Activated B cell treated with CpG ODN at 0.5 μM for 24 hours (primary cell): ENCODE measurements at regions of chr19 and their contacts with region 1.

Region 1: DNA sequence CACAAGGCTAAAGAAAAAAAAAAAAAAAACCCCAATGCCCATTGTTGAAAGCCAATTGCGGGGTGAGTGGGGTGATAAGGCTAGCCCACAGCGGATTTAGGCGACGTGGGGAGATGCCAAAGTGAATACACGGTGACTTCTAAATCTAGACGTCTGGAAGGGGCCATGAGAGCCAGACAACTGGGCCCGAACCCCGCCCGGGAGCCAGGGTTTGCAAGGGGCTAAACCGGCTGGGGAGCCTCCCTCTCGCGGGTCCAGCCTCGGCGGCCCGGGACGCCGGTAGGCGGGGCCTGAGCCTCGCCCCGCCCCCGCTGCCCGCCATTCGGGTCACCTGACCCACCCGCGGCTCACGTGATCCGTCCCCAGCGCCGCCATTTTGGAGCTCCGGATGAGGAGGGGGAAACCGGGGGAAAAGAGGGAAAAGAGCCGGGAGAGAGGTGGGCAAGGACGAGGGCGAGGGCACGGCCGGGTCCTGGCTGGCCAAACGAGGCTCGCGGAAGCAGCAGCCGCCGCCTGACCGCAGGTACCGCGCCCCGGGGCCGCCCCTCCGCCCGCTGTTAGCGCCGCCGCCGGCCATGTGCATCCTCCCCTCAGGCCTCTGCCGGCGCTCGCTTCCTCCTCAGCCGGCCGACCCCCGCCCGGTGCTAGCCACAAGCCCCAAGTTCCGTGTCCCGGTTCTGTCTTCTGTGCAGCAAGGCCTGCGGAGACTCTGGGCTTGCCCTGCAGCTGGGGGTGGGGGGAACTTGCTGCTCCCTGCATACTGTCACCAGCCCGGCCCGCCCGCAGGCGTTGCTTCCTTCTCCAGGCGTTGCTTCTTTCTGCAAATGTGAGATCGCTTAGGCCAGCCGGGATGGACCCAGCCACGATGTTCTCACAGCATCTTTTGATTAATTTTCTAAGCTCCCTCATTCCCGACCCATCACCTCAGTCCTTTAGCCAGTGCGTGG is at the start of gene ZNF507:
- DNase-seq: peak; percentile 84
- ATAC-seq: peak; percentile 86
- H3K4me3 Mint-ChIP-seq: peak within 1 kb of the TSS; percentile 98
- H3K27ac Mint-ChIP-seq: peak within 1 kb of the TSS; percentile 92
- H3K4me1 Mint-ChIP-seq: peaks cover 36% of the 10 kb centered on the region
- H3K27me3 Mint-ChIP-seq: no peaks in the 10 kb centered on the region
- CTCF ChIP-seq: no peak
- total RNA-seq, gene ZNF507: 35.3 and 38.6 TPM in 2 replicates

Region 2: GRCh38 chr19:32405431-32406161 is 60.1 kb after region 1 on chr19 and contains the start of gene DPY19L3:
- CTCF ChIA-PET with region 1: interaction called, 4 read pairs
- POLR2A ChIA-PET with region 1: interaction called, 38 read pairs
- intact Hi-C with region 1: loop called (anchors 1 kb)
- DNase-seq: peak; percentile 93
- ATAC-seq: peak; percentile 91
- H3K4me3 Mint-ChIP-seq: peak within 1 kb of the TSS; percentile 91
- H3K27ac Mint-ChIP-seq: peak within 1 kb of the TSS; percentile 93
- H3K4me1 Mint-ChIP-seq: peaks cover 16% of the 10 kb centered on the region
- H3K27me3 Mint-ChIP-seq: no peaks in the 10 kb centered on the region
- CTCF ChIP-seq: no peak
- total RNA-seq, gene DPY19L3: 22.1 and 29.8 TPM in 2 replicates

Region 3: DNA sequence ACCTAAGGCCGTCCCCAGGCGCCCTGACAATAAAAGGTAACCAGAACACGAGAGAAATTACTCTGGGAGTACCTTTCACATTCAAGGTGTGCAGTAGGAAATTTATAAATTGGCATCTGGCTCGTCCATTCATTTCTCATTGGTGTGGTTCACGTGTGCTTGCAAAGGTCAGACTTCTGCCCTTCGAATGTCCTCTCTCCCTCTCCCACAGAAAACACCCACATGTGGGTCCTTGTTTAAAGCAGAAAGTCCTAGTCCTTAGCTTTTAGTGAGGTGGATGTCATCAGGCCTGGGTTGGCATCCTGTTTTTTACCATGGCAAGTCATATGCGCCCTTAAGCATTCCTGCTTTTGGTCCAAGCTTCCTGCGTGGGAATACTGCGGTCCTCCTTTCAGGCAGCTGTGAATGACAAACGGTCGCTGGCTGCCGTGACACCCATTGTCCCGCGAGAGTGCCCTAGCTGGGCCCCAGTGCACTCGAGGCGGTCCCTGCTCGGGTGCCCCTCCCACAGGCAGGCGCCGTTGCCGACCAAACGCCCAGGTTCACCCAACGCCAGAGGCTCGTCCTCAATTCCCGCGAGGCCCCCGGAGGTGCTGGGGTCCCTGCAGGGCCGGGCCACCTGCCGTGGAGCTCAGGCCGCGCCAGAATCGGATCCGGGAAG is 345.9 kb after region 1 on chr19 and contains the start of gene NUDT19:
- CTCF ChIA-PET with region 1: no interaction called
- POLR2A ChIA-PET with region 1: interaction called, 4 read pairs
- intact Hi-C with region 1: loop called (anchors 5 kb)
- DNase-seq: peak; percentile 74
- ATAC-seq: peak; percentile 94
- H3K4me3 Mint-ChIP-seq: peak within 1 kb of the TSS; percentile 85
- H3K27ac Mint-ChIP-seq: peak within 1 kb of the TSS; percentile 70
- H3K4me1 Mint-ChIP-seq: peaks cover 41% of the 10 kb centered on the region
- H3K27me3 Mint-ChIP-seq: no peaks in the 10 kb centered on the region
- CTCF ChIP-seq: no peak
- total RNA-seq, gene NUDT19: 8.5 and 9.0 TPM in 2 replicates

Region 4: DNA sequence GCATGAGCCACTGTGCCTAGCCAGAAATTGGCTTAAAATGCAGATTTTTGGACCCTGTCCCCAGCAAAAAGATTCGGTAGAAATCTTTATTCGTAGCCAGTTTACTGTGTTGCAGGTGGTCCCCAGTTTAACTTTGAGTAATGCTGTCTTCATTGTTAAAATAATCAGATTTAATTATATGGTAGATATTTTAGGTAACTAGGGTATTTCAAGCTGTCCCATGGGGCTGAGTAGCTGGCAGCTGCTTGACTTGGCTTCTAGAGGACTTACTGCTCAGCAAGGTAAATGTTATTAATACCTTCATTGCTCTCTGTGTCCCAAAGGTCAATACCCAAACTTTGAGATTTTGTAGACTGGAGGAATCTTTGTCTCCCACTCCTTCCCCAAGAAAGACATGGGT is 1847.9 kb after region 1 on chr19:
- CTCF ChIA-PET with region 1: no interaction called
- POLR2A ChIA-PET with region 1: interaction called, 11 read pairs
- intact Hi-C with region 1: no loop called
- DNase-seq: no peak
- ATAC-seq: peak; percentile 85
- H3K4me3 Mint-ChIP-seq: peak overlapping the region; percentile 66
- H3K27ac Mint-ChIP-seq: peak overlapping the region; percentile 82
- H3K4me1 Mint-ChIP-seq: peaks cover 68% of the 10 kb centered on the region
- H3K27me3 Mint-ChIP-seq: no peaks in the 10 kb centered on the region
- CTCF ChIP-seq: no peak